ENCODE measurements at regions of chr19 and their contacts with region 1.

Region 1: GRCh38 chr19:48152551-48152950 is 17.6 kb downstream of the LIG1 start:
- DNase-seq: peak; percentile 24
- ATAC-seq: no peak
- H3K4me3 ChIP-seq: no peak overlapping the region
- H3K27ac ChIP-seq: no peak overlapping the region
- H3K4me1 ChIP-seq: 0 out of 2 replicates have a peak, but pooled peaks cover 5% of the 10 kb centered on the region
- H3K27me3 ChIP-seq: no peaks in the 10 kb centered on the region
- CTCF ChIP-seq: peak; percentile 75
- EP300 ChIP-seq: no peak
- POLR2A ChIP-seq: no peak
- RAD21 ChIP-seq: no peak

Region 2: DNA sequence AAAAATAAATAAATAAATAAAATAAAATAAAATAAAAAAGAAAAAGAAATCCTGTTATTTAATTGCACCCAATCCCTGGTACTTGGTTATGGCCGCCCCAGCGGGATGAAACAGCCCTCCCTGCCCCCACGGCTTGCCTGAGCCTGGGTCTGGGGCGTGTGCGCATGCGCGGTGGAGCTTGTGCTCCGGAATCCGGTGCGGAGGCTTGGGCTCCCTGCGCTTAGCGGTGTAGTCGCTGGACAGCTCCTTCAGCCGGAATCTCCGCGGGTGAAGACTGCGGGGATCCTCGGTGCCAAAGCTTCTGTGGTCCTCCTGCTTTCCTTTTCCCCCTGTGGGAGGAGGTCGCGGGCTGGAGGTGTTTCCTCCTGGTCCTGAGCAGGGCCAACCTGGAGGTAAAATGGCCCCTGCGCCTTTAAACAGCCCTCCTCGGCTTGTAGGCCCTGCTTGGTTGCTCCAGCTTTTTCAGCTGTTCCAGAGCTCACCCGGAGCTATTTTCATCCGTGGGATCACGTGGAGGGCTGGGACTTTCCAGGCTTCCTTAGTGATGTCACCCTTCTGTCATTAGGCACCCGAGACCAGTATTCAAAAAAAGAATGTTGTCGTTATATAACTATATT is 42.1 kb before region 1 on chr19 and contains the start of gene PLA2G4C:
- CTCF ChIA-PET with region 1: interaction called, 17 read pairs
- POLR2A ChIA-PET with region 1: no interaction called
- in situ Hi-C with region 1: loop called (anchors 5 kb)
- intact Hi-C with region 1: no loop called
- DNase-seq: peak; percentile 72
- ATAC-seq: peak; percentile 73
- H3K4me3 ChIP-seq: peak within 1 kb of the TSS; percentile 71 to 87 (median 74)
- H3K27ac ChIP-seq: peak within 1 kb of the TSS; percentile 78
- H3K4me1 ChIP-seq: peaks cover 18% of the 10 kb centered on the region
- H3K27me3 ChIP-seq: no peaks in the 10 kb centered on the region; a peak in 1 of 5 replicates
- CTCF ChIP-seq: peak; percentile 7; the same call in 1 of the 2 replicates
- EP300 ChIP-seq: no peak
- POLR2A ChIP-seq: peak; percentile 76 to 78
- RAD21 ChIP-seq: no peak
- total RNA-seq, gene PLA2G4C: 0.87 and 1.7 TPM in 2 replicates

Measured in HepG2 (cell line).